ENCODE measurements at regions of chr4 and their contacts with region 1.

Region 1: DNA sequence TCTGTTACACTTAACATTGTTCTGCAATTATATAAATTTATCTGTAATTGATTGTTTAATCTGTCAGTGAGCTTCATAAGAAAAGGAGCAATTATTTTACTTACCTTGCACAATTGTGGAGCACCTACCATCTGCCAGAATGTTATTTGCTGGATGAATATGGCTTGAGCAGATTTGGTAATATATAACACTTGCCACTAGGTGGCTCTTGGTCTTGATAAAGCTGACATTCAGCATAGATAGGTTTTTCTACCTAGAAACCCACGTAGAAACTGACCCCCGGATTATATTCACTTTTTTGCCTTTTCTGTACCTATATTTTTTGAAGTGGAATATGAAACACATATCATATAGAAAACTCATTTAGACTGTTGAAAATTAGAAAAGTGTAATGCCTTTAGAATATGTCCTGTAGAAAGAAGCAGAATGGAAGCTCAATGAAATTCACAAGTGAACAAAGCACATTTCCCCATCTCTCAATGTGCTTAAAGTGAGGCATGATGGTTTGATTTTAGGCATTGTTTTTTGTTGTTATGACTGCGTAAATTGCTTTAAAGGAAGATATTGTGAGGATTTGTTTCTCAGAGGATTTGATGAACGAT is 9.5 kb downstream of the RBPJ start:
- H3K4me3 ChIP-seq: no peak overlapping the region
- H3K27ac ChIP-seq: no peak overlapping the region
- H3K4me1 ChIP-seq: peaks cover 2% of the 10 kb centered on the region; the same call in 1 of the 2 replicates
- CTCF ChIP-seq: no peak

Region 2: DNA sequence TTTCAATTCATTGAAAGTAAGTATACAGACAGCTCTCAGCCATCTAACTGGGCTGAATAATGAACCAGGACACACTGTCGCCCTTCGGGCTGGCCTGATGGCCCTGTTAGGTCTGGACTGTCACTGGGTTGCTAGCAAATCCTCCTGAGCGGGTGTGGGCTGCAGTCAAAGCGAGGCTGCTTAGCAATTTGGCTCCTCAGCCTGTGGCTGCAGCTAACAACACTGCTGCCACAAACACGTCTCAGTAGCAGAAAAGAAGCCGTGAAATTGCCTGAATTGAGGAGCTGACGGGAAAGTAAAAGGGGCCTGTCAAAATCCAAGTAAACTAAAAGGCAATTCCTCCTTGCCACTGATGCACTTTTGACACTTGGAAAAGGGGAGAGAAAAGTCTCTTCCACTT is 343.5 kb before region 1 on chr4:
- CTCF ChIA-PET with region 1: interaction called, 10 read pairs
- POLR2A ChIA-PET with region 1: no interaction called
- H3K4me3 ChIP-seq: no peak overlapping the region
- H3K27ac ChIP-seq: no peak overlapping the region
- H3K4me1 ChIP-seq: no peaks in the 10 kb centered on the region
- CTCF ChIP-seq: no peak

Region 3: GRCh38 chr4:26081795-26082498 is 248.3 kb before region 1 on chr4:
- CTCF ChIA-PET with region 1: interaction called, 18 read pairs
- POLR2A ChIA-PET with region 1: no interaction called
- H3K4me3 ChIP-seq: no peak overlapping the region
- H3K27ac ChIP-seq: no peak overlapping the region
- H3K4me1 ChIP-seq: 0 out of 2 replicates have a peak, but pooled peaks cover 2% of the 10 kb centered on the region
- CTCF ChIP-seq: no peak

Region 4: GRCh38 chr4:26351685-26352084 is 21.4 kb after region 1 on chr4:
- CTCF ChIA-PET with region 1: interaction called, 10 read pairs
- POLR2A ChIA-PET with region 1: no interaction called
- H3K4me3 ChIP-seq: no peak overlapping the region
- H3K27ac ChIP-seq: no peak overlapping the region
- H3K4me1 ChIP-seq: no peaks in the 10 kb centered on the region
- CTCF ChIP-seq: no peak

Region 5: DNA sequence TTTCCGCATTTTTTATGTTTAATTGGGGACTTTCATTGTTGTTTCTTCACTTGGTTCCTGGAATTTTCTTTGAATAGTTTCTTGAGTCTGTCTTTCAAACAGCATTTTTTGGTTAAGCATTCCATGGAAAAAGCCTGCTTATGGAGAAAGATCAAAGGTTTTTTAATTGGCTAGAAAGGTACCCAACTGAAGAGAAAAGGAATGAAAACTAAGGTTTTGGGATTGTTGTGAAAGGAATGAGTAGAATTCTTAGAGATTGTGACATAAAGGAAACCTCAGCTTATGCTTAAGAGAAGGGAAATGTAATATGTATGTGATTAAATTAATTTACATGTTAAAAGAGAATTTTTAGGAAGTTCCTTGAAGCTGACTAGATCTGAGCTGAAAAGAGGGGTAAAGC is 77.2 kb after region 1 on chr4:
- CTCF ChIA-PET with region 1: interaction called, 15 read pairs
- POLR2A ChIA-PET with region 1: interaction called, 3 read pairs
- H3K4me3 ChIP-seq: no peak overlapping the region
- H3K27ac ChIP-seq: no peak overlapping the region
- H3K4me1 ChIP-seq: no peaks in the 10 kb centered on the region
- CTCF ChIP-seq: no peak